ENCODE measurements at regions of chr4 and their contacts with region 1.

Region 1: GRCh38 chr4:140359562-140360427 is 13.7 kb upstream of the SCOC start:
- DNase-seq: peak in 8 of 10 donors; percentile 58 to 90 (median 72)

Region 2: GRCh38 chr4:140423106-140423505 is 63.3 kb after region 1 on chr4:
- intact Hi-C with region 1: no loop called
- DNase-seq: no peak

Region 3: GRCh38 chr4:140609548-140610425 is 250.0 kb after region 1 on chr4:
- intact Hi-C with region 1: loop called (anchors 5 kb)
- DNase-seq: peak in 1 of 10 donors; percentile 14

Region 4: GRCh38 chr4:140837736-140838135 is 477.9 kb after region 1 on chr4:
- intact Hi-C with region 1: no loop called
- DNase-seq: no peak

Region 5: DNA sequence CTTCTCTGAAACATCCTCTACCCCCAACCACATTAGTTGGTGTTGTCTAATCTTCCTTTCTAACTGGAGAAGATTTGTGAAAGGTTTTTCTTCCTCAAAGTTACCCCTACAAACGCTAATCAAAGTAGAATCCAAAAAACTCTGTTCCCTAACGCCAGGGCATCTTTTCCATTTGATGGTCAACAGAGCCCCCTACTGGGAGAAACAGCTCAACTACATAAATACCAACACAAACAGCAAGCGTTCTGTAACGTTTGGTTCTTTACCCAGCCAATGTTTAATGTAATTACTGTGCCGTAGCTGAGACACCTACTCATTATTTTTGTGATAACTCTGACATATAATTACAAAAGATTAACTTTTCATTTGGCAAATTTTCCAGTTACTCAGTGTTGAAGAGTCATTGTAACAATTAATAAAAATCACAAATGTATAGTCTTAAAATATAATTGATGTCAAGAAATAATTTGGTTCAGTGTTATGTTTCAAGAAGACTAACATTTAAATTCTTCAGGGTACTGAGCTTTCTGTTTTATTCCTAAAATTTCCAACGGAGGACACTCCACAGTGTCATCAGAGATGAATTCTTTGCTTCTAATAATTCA is 491.3 kb after region 1 on chr4:
- intact Hi-C with region 1: loop called (anchors 5 kb)
- DNase-seq: peak in 3 of 10 donors; percentile 19 to 37 (median 35)

Measured in posterior cingulate gyrus (tissue), 11 donors.